Prostate gland (tissue), 2 donors: ENCODE measurements at regions of chr1 and their contacts with region 1.

Region 1: GRCh38 chr1:12314333-12314903 is 84.6 kb downstream of the VPS13D start:
- DNase-seq: no peak
- H3K4me3 ChIP-seq: no peak overlapping the region
- H3K27ac ChIP-seq: no peak overlapping the region
- H3K4me1 ChIP-seq: peaks cover 10% of the 10 kb centered on the region
- H3K27me3 ChIP-seq: no peaks in the 10 kb centered on the region
- CTCF ChIP-seq: peak in 3 of 4 experiments; percentile 28 to 66 (median 63)
- POLR2A ChIP-seq: no peak

Region 2: DNA sequence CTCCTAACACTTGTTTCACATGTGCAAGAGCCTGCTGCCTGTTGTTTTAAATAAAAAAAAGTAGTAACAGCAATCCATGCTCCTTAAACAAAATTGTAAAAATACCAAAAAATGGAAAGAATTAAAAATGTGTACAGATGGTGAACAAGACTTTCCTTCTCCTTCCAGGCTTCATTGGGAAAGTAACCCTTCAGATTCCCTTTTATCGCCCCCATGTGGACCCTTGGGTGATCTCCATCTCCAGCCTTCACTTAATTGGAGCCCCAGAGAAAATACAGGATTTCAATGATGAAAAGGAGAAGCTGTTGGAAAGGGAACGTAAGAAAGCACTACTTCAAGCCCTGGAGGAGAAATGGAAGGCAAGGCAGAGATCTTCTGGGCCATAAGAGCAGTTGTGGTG is 70.3 kb before region 1 on chr1:
- intact Hi-C with region 1: no loop called
- DNase-seq: no peak
- H3K4me3 ChIP-seq: no peak overlapping the region
- H3K27ac ChIP-seq: peak overlapping the region; percentile 59 to 65
- H3K4me1 ChIP-seq: no peaks in the 10 kb centered on the region
- H3K27me3 ChIP-seq: no peaks in the 10 kb centered on the region
- CTCF ChIP-seq: no peak
- POLR2A ChIP-seq: no peak

Region 3: GRCh38 chr1:12539705-12540579 is 225.5 kb after region 1 on chr1:
- intact Hi-C with region 1: loop called (anchors 5 kb)
- DNase-seq: no peak
- H3K4me3 ChIP-seq: no peak overlapping the region
- H3K27ac ChIP-seq: peak overlapping the region; percentile 36 to 67
- H3K4me1 ChIP-seq: no peaks in the 10 kb centered on the region
- H3K27me3 ChIP-seq: no peaks in the 10 kb centered on the region
- CTCF ChIP-seq: no peak
- POLR2A ChIP-seq: no peak

Region 4: GRCh38 chr1:12658531-12659453 is 344.4 kb after region 1 on chr1:
- intact Hi-C with region 1: loop called (anchors 2 kb)
- DNase-seq: peak; percentile 70
- H3K4me3 ChIP-seq: no peak overlapping the region
- H3K27ac ChIP-seq: no peak overlapping the region
- H3K4me1 ChIP-seq: no peaks in the 10 kb centered on the region
- H3K27me3 ChIP-seq: no peaks in the 10 kb centered on the region
- CTCF ChIP-seq: peak; percentile 93 to 99 (median 94)
- POLR2A ChIP-seq: no peak